ENCODE measurements at regions of chr15 and their contacts with region 1.

Region 1: GRCh38 chr15:39273717-39274411 is 307.0 kb upstream of the THBS1 start:
- DNase-seq: peak; percentile 81 to 82
- H3K4me3 ChIP-seq: no peak overlapping the region
- H3K4me3 Mint-ChIP-seq: peak overlapping the region; percentile 51
- H3K27ac Mint-ChIP-seq: peak overlapping the region; percentile 69
- H3K4me1 ChIP-seq: peaks cover 60% of the 10 kb centered on the region
- H3K4me1 Mint-ChIP-seq: peaks cover 48% of the 10 kb centered on the region
- H3K27me3 ChIP-seq: no peaks in the 10 kb centered on the region
- H3K27me3 Mint-ChIP-seq: no peaks in the 10 kb centered on the region
- CTCF ChIP-seq: no peak

Region 2: GRCh38 chr15:39125904-39126303 is 148.0 kb before region 1 on chr15:
- CTCF ChIA-PET with region 1: no interaction called
- POLR2A ChIA-PET with region 1: no interaction called
- intact Hi-C with region 1: loop called (anchors 5 kb)
- DNase-seq: peak in 1 of 2 experiments; percentile 52
- H3K4me3 ChIP-seq: no peak overlapping the region
- H3K4me3 Mint-ChIP-seq: no peak overlapping the region
- H3K27ac Mint-ChIP-seq: no peak overlapping the region
- H3K4me1 ChIP-seq: peaks cover 37% of the 10 kb centered on the region
- H3K4me1 Mint-ChIP-seq: peaks cover 22% of the 10 kb centered on the region
- H3K27me3 ChIP-seq: no peaks in the 10 kb centered on the region
- H3K27me3 Mint-ChIP-seq: no peaks in the 10 kb centered on the region
- CTCF ChIP-seq: peak; percentile 57 to 65

Region 3: GRCh38 chr15:39191871-39192291 is 82.0 kb before region 1 on chr15:
- CTCF ChIA-PET with region 1: no interaction called
- POLR2A ChIA-PET with region 1: no interaction called
- intact Hi-C with region 1: loop called (anchors 5 kb)
- DNase-seq: peak in 1 of 2 experiments; percentile 38
- H3K4me3 ChIP-seq: no peak overlapping the region
- H3K4me3 Mint-ChIP-seq: peak overlapping the region; percentile 30
- H3K27ac Mint-ChIP-seq: peak overlapping the region; percentile 88
- H3K4me1 ChIP-seq: peaks cover 27% of the 10 kb centered on the region
- H3K4me1 Mint-ChIP-seq: peaks cover 26% of the 10 kb centered on the region
- H3K27me3 ChIP-seq: no peaks in the 10 kb centered on the region
- H3K27me3 Mint-ChIP-seq: no peaks in the 10 kb centered on the region
- CTCF ChIP-seq: no peak

Region 4: GRCh38 chr15:39232512-39232911 is 41.4 kb before region 1 on chr15:
- CTCF ChIA-PET with region 1: no interaction called
- POLR2A ChIA-PET with region 1: no interaction called
- intact Hi-C with region 1: no loop called
- DNase-seq: no peak
- H3K4me3 ChIP-seq: no peak overlapping the region
- H3K4me3 Mint-ChIP-seq: no peak overlapping the region
- H3K27ac Mint-ChIP-seq: no peak overlapping the region
- H3K4me1 ChIP-seq: peaks cover 1% of the 10 kb centered on the region
- H3K4me1 Mint-ChIP-seq: peaks cover 8% of the 10 kb centered on the region
- H3K27me3 ChIP-seq: no peaks in the 10 kb centered on the region
- H3K27me3 Mint-ChIP-seq: no peaks in the 10 kb centered on the region
- CTCF ChIP-seq: no peak

Region 5: DNA sequence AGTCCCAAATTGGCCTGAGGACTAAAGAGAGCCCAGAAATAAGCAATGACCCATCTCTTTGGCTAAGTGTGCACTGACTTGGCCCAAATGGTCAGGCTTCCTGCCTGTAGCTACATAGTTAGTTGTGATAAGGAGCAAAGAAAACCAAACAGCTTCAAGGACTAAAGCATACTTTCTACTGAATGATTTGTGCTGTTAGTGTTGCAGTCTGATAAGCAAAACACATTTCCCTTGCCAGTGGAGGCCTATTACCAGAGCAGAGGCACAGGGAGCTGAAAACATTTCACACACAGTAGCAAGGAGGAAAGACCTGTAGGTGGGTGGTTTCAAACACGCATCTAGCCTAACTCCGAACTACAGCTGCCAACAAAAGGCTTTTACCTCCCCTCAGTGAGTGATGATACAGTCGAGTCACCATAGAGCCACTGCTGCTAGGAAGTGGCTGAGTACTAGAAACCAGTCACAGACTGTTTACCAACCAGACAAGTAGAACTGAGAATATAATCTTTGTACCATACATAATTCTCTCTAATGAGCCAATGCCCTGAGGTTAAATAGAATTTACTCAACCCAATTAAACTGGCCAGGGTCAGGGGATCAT is 84.7 kb after region 1 on chr15:
- CTCF ChIA-PET with region 1: no interaction called
- POLR2A ChIA-PET with region 1: no interaction called
- intact Hi-C with region 1: loop called (anchors 5 kb)
- DNase-seq: no peak
- H3K4me3 ChIP-seq: no peak overlapping the region
- H3K4me3 Mint-ChIP-seq: no peak overlapping the region
- H3K27ac Mint-ChIP-seq: peak overlapping the region; percentile 45
- H3K4me1 ChIP-seq: peaks cover 41% of the 10 kb centered on the region
- H3K4me1 Mint-ChIP-seq: peaks cover 24% of the 10 kb centered on the region
- H3K27me3 ChIP-seq: no peaks in the 10 kb centered on the region
- H3K27me3 Mint-ChIP-seq: no peaks in the 10 kb centered on the region
- CTCF ChIP-seq: no peak

Region 6: GRCh38 chr15:39438799-39439592 is 165.1 kb after region 1 on chr15:
- CTCF ChIA-PET with region 1: no interaction called
- POLR2A ChIA-PET with region 1: no interaction called
- intact Hi-C with region 1: loop called (anchors 5 kb)
- DNase-seq: peak; percentile 44 to 48
- H3K4me3 ChIP-seq: no peak overlapping the region
- H3K4me3 Mint-ChIP-seq: no peak overlapping the region
- H3K27ac Mint-ChIP-seq: no peak overlapping the region
- H3K4me1 ChIP-seq: peaks cover 26% of the 10 kb centered on the region
- H3K4me1 Mint-ChIP-seq: peaks cover 24% of the 10 kb centered on the region
- H3K27me3 ChIP-seq: no peaks in the 10 kb centered on the region
- H3K27me3 Mint-ChIP-seq: no peaks in the 10 kb centered on the region
- CTCF ChIP-seq: peak; percentile 28 to 47

Region 7: DNA sequence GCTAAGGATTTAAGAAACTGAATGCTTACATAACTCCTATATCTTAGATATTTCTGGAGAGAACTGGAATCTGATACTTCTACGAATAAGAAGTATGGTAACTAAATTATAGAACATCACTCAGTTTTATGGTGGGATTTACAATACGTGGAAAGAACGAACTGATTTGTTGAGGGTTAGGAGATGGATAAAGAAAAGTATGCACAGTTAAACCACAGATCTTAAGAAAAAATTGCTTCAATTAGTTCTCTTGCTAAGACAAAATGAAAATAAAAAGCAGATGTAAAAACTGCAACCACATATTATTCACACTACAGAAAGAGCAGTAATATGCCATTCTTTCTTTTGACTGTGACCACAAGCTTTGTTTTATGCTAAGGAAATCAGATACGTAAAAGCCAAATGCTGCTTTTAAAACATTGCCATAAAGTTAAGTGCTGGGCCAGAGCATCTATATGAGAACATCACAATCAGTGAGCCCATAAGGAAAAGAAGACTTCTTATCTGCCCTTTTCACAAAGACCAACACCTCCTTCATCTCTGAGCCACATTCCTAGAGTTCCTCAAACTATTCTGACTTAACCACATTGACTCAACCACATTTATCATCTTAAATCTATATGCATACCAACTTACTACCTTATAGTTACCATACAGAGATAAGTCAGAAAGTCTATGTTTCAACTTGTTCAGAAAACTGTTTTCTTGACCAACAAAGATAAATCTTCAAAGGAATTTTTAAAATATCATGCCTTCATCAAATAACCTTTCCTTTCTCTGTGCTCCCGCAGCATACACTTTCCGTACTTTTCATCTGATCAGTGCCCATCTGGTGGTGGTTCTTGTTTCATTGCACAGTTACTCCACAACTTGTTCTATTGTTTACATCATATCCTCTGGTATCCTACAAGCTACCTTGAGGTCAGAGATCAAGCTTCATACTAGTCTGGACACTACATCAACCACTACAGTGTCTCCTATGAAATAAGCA is 447.1 kb after region 1 on chr15:
- CTCF ChIA-PET with region 1: no interaction called
- POLR2A ChIA-PET with region 1: no interaction called
- intact Hi-C with region 1: loop called (anchors 5 kb)
- DNase-seq: peak; percentile 83 to 87
- H3K4me3 ChIP-seq: no peak overlapping the region
- H3K4me3 Mint-ChIP-seq: no peak overlapping the region
- H3K27ac Mint-ChIP-seq: peak overlapping the region; percentile 94
- H3K4me1 ChIP-seq: peaks cover 61% of the 10 kb centered on the region
- H3K4me1 Mint-ChIP-seq: peaks cover 39% of the 10 kb centered on the region
- H3K27me3 ChIP-seq: no peaks in the 10 kb centered on the region
- H3K27me3 Mint-ChIP-seq: no peaks in the 10 kb centered on the region
- CTCF ChIP-seq: peak in 1 of 2 experiments; percentile 16

Measured in Caco-2 (cell line).